Right ventricle myocardium superior (tissue), 1 donor: ENCODE measurements at regions of chr15 and their contacts with region 1.

Region 1: DNA sequence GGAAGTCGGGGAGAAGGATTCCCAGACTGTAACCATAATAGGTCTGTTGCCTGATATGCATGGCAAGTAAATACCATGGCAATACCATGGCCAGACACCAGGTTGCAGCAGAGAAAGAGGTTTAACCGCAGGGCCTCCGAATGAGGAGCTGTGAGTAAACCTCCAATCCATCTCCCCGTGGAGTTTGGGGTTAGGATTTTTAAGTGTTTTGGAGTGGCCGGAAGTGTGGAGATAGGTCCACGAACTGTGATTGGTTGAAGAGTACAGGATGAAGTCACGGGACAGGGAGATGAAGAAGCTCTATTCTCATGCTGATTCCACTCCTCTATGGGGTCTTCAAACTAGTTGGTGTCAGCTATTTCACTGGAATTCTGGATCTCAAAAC is 127.9 kb downstream of the ST8SIA2 start:
- DNase-seq: peak; percentile 76
- ATAC-seq: peak; percentile 97

Region 2: GRCh38 chr15:92069308-92070250 is 452.0 kb before region 1 on chr15:
- intact Hi-C with region 1: no loop called
- DNase-seq: no peak
- ATAC-seq: peak; percentile 64

Region 3: DNA sequence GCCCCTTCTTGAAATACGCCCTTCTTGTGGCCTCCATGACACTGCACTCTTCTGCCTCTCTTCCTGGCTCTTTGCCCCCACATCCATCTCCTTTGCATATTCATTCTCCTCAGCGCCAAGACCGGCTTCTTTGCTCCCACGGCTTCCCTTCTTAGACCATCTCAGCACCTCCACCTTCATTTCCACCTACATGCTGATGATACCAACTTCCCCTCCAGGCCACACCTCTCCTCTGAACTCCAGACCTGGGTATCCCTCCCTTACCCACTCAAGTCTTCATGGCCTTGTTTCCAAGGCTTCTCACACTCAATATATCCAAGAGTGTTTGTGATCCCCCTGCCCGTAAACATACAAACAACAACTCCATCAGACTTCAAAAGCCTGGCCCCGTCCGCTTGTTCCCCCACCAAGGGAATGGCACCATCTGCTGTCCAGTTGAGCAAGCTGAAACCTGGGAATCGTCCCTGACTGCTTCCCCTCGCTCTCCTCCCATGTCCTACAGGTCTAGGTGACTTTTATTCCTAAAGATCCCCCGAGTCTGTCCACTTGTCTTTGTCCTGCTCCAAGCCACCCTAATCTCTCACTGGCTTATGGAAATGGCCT is 161.7 kb after region 1 on chr15:
- intact Hi-C with region 1: loop called (anchors 2 kb)
- DNase-seq: peak; percentile 52
- ATAC-seq: peak; percentile 63

Region 4: DNA sequence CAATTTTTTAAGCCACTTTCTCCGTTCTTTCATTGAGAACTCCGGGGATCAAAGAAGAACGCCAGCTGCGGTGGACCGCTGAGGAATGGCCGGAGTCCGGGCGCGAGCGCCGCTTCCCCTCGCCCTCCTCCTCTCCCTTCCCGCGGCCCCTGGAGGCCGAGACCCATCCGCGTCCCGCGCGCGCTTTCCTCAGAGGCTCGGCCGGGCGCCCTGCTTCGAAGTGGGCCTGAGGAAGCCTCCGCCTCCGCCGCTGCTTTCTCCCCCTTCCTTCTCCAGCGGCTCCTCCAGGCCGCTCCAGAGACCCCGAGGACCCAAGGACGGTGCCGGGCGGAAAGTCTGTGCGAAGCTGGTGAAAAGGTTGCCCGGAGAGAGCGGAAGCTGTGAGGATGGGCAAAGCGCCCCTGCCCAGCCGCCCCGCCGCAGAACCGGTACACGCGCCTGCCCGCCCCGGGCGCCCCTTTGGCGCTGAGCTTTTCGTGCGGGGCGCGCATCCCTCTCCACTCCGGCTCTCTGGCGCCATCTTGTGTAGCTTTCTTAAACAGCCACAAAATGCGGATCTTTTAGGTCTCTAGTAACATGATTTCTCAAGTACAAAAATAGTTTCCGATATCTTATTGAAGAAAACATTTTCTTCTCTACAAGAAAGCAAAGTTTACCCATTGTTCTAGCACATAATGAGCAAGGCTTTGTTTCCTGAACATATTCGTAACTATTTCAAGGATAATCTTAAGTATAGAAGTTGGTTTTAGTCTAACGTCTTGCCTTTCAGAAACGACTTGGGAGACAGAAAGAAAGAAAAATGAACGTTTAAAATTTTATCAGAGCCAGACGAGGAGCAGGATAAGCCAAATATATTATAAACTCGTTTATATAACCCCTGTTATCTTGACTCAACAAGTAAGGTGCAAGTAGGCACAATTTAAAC is 193.1 kb after region 1 on chr15:
- intact Hi-C with region 1: loop called (anchors 5 kb)
- DNase-seq: peak; percentile 77
- ATAC-seq: peak; percentile 95

Region 5: GRCh38 chr15:92839696-92840095 is 318.1 kb after region 1 on chr15:
- intact Hi-C with region 1: no loop called
- DNase-seq: no peak
- ATAC-seq: no peak